ENCODE measurements at regions of chr7 and their contacts with region 1.

Region 1: DNA sequence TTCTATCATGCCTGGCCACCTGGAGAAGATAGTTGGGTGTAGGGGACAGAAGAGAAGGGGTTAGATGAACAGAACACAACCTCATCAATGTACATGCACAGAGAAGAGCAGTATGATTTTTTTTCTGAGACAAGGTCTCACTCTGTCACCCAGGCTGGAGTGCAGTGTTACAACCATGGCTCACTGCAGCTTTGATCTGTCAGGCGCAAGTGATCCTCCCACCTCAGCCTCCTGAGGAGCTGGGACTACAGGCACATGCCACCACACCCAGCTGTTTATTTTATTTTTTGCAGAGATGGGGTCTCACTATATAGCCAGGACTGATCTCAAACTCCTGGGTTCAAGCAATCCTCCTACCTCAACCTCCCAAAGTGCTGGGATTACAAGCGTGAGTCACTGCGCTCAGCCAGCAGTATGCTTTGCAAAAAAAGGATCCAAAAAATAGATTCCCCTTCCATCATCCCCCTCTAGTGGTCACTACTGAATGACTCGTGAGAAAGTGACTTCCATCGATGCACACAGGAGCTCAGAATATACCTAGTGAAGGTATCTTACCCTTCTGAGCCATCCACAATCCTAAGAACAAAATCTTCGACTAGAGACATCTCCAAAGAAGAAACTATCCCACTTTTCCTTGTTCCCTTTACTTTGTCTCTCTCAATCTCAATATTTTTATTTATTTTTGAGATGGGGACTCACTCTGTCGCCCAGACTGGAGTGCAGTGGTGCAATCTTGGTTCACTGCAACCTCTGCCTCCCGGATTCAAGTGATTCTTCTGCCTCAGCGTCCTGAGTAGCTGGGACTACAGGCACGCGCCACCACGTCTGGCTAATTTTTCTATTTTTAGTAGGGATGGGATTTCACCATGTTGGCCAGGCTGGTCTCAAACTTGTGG is 21.0 kb downstream of the ZCWPW1 start:
- DNase-seq: no peak
- ATAC-seq: peak; percentile 96
- H3K4me3 Mint-ChIP-seq: no peak overlapping the region
- H3K27ac Mint-ChIP-seq: no peak overlapping the region
- H3K4me1 Mint-ChIP-seq: peaks cover 7% of the 10 kb centered on the region
- H3K27me3 Mint-ChIP-seq: no peaks in the 10 kb centered on the region
- CTCF ChIP-seq: peak; percentile 54

Region 2: DNA sequence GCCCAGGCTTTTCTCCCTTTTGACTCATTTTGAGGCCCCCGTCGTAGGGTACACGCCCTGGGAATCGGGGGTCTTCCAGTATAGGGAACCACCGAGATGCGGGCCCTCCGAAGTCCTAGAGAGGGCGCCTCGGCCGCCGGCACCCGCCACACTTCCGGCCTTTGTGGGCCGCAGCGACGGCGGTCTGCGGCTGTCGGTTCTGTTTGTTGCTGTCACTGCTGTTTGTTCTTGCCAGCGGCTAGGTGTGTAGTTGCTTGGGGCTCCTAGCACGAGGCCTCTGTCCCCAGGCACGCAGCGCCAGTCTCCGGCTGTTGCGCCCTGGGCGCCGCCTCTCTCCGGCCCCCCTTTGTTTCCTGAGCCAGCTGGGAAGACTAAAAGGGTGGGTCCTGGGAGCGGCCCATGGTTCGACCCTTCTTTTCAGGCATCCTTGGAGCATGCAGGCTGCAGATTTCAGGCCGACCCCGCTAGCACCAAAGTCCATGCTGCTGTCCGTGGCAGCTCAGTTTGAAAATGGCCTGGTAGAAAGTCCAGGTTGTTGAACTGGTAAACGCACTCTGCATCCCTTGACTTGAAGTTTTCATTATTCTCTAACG is 409.9 kb before region 1 on chr7:
- CTCF ChIA-PET with region 1: no interaction called
- POLR2A ChIA-PET with region 1: interaction called, 4 read pairs
- intact Hi-C with region 1: loop called (anchors 10 kb)
- DNase-seq: peak; percentile 60
- ATAC-seq: peak; percentile 92
- H3K4me3 Mint-ChIP-seq: peak overlapping the region; percentile 80
- H3K27ac Mint-ChIP-seq: peak overlapping the region; percentile 85
- H3K4me1 Mint-ChIP-seq: peaks cover 12% of the 10 kb centered on the region
- H3K27me3 Mint-ChIP-seq: peaks cover 1% of the 10 kb centered on the region
- CTCF ChIP-seq: no peak

Region 3: GRCh38 chr7:100221231-100221718 is 186.3 kb before region 1 on chr7:
- CTCF ChIA-PET with region 1: interaction called, 3 read pairs
- POLR2A ChIA-PET with region 1: interaction called, 3 read pairs
- intact Hi-C with region 1: loop called (anchors 1 kb)
- DNase-seq: peak; percentile 48
- ATAC-seq: peak; percentile 40
- H3K4me3 Mint-ChIP-seq: peak overlapping the region; percentile 86
- H3K27ac Mint-ChIP-seq: peak overlapping the region; percentile 95
- H3K4me1 Mint-ChIP-seq: peaks cover 84% of the 10 kb centered on the region
- H3K27me3 Mint-ChIP-seq: no peaks in the 10 kb centered on the region
- CTCF ChIP-seq: no peak

Region 4: DNA sequence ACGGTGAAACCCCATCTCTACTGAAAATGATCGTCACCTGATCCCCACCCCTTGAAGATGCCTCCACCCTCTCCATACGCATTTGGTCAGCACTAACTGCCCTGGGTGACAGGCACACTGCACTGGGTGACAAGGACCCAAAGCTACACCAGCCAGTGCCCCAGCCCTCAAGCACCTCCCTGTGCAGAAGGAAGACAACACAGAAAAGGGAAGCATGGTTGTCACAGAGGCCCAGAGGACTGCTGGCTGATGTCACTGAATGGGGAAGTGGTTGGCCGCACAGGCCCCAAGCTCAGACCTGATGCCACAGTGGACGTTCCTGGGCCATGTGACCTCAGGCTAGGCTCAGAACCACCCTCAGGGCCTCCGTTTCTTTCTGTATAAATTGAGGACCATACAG is 38.4 kb before region 1 on chr7:
- CTCF ChIA-PET with region 1: interaction called, 17 read pairs
- POLR2A ChIA-PET with region 1: interaction called, 14 read pairs
- intact Hi-C with region 1: loop called (anchors 1 kb)
- DNase-seq: peak; percentile 69
- ATAC-seq: peak; percentile 80
- H3K4me3 Mint-ChIP-seq: peak overlapping the region; percentile 44
- H3K27ac Mint-ChIP-seq: peak overlapping the region; percentile 91
- H3K4me1 Mint-ChIP-seq: peaks cover 92% of the 10 kb centered on the region
- H3K27me3 Mint-ChIP-seq: no peaks in the 10 kb centered on the region
- CTCF ChIP-seq: no peak

Region 5: GRCh38 chr7:100396421-100396982 is 11.0 kb before region 1 on chr7:
- CTCF ChIA-PET with region 1: interaction called, 10 read pairs
- POLR2A ChIA-PET with region 1: interaction called, 9 read pairs
- intact Hi-C with region 1: loop called (anchors 1 kb)
- DNase-seq: no peak
- ATAC-seq: peak; percentile 89
- H3K4me3 Mint-ChIP-seq: peak overlapping the region; percentile 73
- H3K27ac Mint-ChIP-seq: peak overlapping the region; percentile 93
- H3K4me1 Mint-ChIP-seq: peaks cover 59% of the 10 kb centered on the region
- H3K27me3 Mint-ChIP-seq: no peaks in the 10 kb centered on the region
- CTCF ChIP-seq: no peak

Region 6: GRCh38 chr7:100444311-100445278 is 37.1 kb after region 1 on chr7:
- CTCF ChIA-PET with region 1: interaction called, 12 read pairs
- POLR2A ChIA-PET with region 1: interaction called, 6 read pairs
- intact Hi-C with region 1: no loop called
- DNase-seq: no peak
- ATAC-seq: peak; percentile 60
- H3K4me3 Mint-ChIP-seq: no peak overlapping the region
- H3K27ac Mint-ChIP-seq: peak overlapping the region; percentile 53
- H3K4me1 Mint-ChIP-seq: peaks cover 18% of the 10 kb centered on the region
- H3K27me3 Mint-ChIP-seq: no peaks in the 10 kb centered on the region
- CTCF ChIP-seq: no peak

Measured in activated B cell treated with CpG ODN at 0.5 μM for 24 hours (primary cell).